Esophagus squamous epithelium (tissue), 5 donors: ENCODE measurements at regions of chrX and their contacts with region 1.

Region 1: GRCh38 chrX:1591102-1591900 is at the start of gene AKAP17A:
- DNase-seq: peak; percentile 66
- H3K4me3 ChIP-seq: peak within 1 kb of the TSS; percentile 85 to 97 (median 94)
- H3K27ac ChIP-seq: peak within 1 kb of the TSS; percentile 89 to 96 (median 90)
- H3K4me1 ChIP-seq: peaks cover 10 to 37% (median 11%) of the 10 kb centered on the region in 3 donors
- H3K27me3 ChIP-seq: no peaks in the 10 kb centered on the region
- CTCF ChIP-seq: peak in 3 of 6 experiments; percentile 8 to 57 (median 11)
- POLR2A ChIP-seq: peak in 3 of 4 donors; percentile 80 to 87 (median 82)
- total RNA-seq, gene AKAP17A: 16.2 to 38.7 (median 30.6) TPM

Region 2: DNA sequence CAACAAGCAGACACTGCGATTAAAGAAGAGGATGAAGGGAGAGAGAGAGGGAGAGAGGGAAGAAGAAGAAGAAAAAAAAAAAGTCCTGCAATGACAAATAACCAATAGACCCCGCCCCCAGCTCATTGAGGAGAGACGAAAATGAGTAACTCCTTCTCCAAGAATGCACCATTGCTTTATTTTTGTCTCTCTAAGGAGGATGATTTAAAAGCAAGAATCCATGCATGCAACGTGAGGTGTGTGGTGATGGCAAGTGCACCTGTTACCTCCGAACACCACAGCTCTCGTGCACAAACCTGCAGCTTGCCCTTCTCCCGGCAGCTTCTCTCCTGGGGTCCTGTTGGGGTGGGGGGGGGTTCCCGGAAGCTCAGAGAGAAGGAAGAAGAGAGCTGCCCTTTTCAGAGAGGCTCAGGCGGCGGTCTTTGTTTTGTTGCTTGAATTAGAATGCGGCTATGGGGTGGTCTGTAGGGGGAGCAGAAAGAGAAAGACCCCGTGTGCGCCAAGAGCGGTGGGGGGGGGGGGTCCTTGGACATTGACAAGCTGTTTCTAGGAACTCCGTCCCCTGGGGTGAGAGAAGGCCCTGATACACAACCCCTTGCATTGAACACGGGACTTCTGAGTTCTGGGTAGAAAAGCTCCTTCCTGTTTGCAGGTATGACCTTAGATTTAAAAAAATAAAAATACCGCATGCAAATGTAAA is 479.6 kb before region 1 on chrX:
- intact Hi-C with region 1: no loop called
- DNase-seq: no peak
- H3K4me3 ChIP-seq: no peak overlapping the region
- H3K27ac ChIP-seq: no peak overlapping the region
- H3K4me1 ChIP-seq: no peaks in the 10 kb centered on the region
- H3K27me3 ChIP-seq: peaks cover 0 to 46% (median 0%) of the 10 kb centered on the region in 4 donors
- CTCF ChIP-seq: no peak
- POLR2A ChIP-seq: no peak

Region 3: GRCh38 chrX:1453951-1454785 is 137.1 kb before region 1 on chrX:
- intact Hi-C with region 1: loop called (anchors 10 kb)
- DNase-seq: no peak
- H3K4me3 ChIP-seq: peak overlapping the region; percentile 40 to 94 (median 90)
- H3K27ac ChIP-seq: peak overlapping the region; percentile 51 to 96 (median 94)
- H3K4me1 ChIP-seq: peaks cover 11 to 33% (median 15%) of the 10 kb centered on the region in 3 donors
- H3K27me3 ChIP-seq: no peaks in the 10 kb centered on the region
- CTCF ChIP-seq: peak; percentile 91 to 97 (median 94)
- POLR2A ChIP-seq: no peak

Region 4: DNA sequence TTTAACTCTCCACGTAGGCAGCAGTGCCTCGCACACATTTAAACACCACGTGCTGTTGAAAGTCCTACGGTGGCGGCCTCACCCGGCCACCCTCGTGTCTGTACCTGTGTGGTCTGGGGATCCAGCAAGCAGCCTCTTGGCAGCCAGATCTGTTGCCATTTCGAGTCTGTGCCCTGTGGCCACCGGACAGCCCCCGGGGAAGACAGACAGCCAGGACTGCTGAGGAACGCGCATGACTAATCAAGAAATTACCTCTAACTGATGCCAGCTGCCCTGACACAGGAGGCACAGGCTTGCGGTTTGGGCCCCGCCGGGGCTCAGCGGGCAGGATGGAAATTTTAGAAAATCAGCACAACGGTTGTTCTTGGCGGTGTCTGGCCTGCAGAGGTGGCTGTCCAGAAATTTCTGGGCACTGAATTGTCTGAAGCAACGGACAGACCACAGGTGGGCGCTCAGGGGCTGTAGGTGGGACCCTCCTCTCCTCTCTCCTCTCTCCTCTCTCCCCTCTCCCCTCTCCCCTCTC is 123.0 kb before region 1 on chrX:
- intact Hi-C with region 1: no loop called
- DNase-seq: no peak
- H3K4me3 ChIP-seq: no peak overlapping the region
- H3K27ac ChIP-seq: peak overlapping the region in 2 of 4 donors; percentile 35 to 63
- H3K4me1 ChIP-seq: peaks cover 0 to 21% (median 0%) of the 10 kb centered on the region in 3 donors
- H3K27me3 ChIP-seq: peaks cover 0 to 67% (median 0%) of the 10 kb centered on the region in 4 donors
- CTCF ChIP-seq: no peak
- POLR2A ChIP-seq: no peak